Head of caudate nucleus (tissue), 42 donors: ENCODE measurements at regions of chr3 and their contacts with region 1.

Region 1: GRCh38 chr3:20185701-20186598 is at the start of gene SGO1:
- DNase-seq: peak; percentile 97 to 100 (median 99)

Region 2: DNA sequence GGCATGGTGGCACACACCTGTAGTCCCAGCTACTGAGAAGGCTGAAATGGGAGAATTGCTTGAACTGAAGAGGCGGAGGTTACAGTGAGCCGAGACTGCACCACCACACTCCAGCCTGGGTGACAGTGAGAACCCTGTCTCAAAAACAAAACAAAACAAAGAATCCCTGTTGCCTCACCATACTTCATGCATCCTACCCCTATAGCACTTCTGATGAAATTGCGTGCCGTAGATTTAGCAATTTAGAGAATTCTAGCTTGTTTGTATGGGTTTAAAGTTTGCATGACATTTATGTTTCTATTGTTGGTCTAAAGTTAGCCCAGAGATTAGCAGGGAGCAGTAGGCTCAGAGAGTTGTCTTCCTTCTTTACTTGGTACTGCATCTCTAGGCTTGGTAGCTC is 231.3 kb before region 1 on chr3:
- intact Hi-C with region 1: loop called (anchors 5 kb)
- DNase-seq: no peak

Region 3: DNA sequence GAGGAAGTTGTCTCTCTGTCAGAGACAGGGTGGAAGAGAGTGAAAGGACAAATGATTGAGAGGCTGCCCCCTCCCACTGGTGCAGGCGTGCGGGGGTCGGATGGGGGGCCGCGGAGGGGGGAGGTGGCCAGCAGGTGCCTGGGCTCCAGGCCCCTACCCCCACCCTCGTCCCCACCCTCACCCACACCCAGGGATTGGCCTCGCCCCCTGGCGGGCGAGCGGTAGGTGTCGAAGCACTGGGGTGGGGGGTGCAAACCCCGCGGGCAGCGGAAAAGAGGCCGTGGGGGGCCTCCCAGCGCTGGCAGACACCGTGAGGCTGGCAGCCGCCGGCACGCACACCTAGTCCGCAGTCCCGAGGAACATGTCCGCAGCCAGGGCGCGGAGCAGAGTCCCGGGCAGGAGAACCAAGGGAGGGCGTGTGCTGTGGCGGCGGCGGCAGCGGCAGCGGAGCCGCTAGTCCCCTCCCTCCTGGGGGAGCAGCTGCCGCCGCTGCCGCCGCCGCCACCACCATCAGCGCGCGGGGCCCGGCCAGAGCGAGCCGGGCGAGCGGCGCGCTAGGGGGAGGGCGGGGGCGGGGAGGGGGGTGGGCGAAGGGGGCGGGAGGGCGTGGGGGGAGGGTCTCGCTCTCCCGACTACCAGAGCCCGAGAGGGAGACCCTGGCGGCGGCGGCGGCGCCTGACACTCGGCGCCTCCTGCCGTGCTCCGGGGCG is 146.0 kb before region 1 on chr3 and contains the start of gene KAT2B:
- intact Hi-C with region 1: loop called (anchors 10 kb)
- DNase-seq: peak; percentile 68 to 94 (median 86)

Region 4: GRCh38 chr3:20232906-20233780 is 47.2 kb after region 1 on chr3:
- intact Hi-C with region 1: no loop called
- DNase-seq: no peak